GM12878 (cell line): ENCODE measurements at regions of chr19 and their contacts with region 1.

Region 1: GRCh38 chr19:39792999-39793546 is 14.4 kb downstream of the LEUTX start:
- DNase-seq: peak; percentile 40
- ATAC-seq: peak; percentile 97
- H3K4me3 ChIP-seq: peak overlapping the region; percentile 66
- H3K27ac ChIP-seq: peak overlapping the region; percentile 40; the same call in 1 of the 2 replicates
- H3K4me1 ChIP-seq: peaks cover 16% of the 10 kb centered on the region
- H3K27me3 ChIP-seq: no peaks in the 10 kb centered on the region
- CTCF ChIP-seq: peak; percentile 91 to 96 (median 94)
- EP300 ChIP-seq: no peak
- POLR2A ChIP-seq: no peak
- RAD21 ChIP-seq: peak; percentile 96

Region 2: DNA sequence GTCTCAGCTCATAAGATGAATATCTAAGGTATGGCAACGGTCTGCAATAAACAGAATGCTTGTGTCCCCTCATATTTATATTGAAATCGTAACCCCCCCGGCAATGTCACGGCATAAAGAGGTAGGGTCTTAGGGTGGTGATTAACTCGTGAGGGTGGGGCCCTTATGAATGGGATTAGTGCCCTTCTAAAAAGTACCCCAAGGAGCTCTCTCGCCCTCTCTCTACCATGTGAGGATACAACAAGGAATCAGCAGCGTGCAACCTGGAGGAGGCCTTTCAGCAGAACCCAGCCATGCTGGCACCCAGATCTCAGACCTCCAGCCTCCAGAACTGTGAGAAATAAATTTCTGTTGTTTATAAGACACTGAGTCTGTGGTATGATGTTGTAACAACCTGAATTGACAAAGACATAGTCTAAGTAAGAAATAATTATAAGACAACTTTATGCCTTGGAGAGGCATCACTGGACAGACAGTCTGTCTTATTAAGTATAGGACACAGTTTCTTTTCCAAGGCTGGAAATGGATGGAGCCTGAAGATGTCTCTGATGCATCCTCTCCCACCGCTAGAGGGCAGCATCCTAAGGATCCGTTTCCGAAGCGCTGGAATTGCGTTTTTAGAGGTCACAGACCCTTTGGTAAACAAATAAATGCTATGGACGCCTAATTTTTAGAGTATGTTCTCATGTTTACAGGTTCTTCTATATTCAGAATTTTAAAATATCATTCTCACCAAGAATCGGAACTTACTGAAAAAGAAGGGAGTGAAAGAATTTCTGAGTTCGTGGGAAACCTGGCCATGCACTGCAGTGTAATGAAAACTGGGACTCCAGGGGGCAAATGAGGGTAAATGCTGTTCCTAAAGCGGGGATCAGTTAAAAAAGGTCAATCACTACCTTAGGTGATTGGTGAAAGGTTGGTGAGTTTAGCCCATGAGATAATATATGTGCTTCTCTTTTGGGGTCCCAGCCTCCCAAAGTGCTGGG is 27.7 kb before region 1 on chr19:
- CTCF ChIA-PET with region 1: interaction called, 29 read pairs
- POLR2A ChIA-PET with region 1: no interaction called
- RAD21 ChIA-PET with region 1: interaction called, 11 read pairs
- SMC1A ChIA-PET with region 1: interaction called, 3 read pairs
- in situ Hi-C with region 1: no loop called
- intact Hi-C with region 1: no loop called
- DNase-seq: no peak
- ATAC-seq: no peak
- H3K4me3 ChIP-seq: no peak overlapping the region
- H3K27ac ChIP-seq: no peak overlapping the region
- H3K4me1 ChIP-seq: peaks cover 5% of the 10 kb centered on the region
- H3K27me3 ChIP-seq: no peaks in the 10 kb centered on the region
- CTCF ChIP-seq: peak; percentile 29 to 79 (median 56); a peak in 5 of 6 replicates
- EP300 ChIP-seq: no peak
- POLR2A ChIP-seq: no peak
- RAD21 ChIP-seq: 0 out of 2 replicates have a peak, but pooled peaks have one; percentile 22

Region 3: GRCh38 chr19:39778763-39779162 is 14.3 kb before region 1 on chr19 and contains the start of gene LEUTX:
- CTCF ChIA-PET with region 1: interaction called, 38 read pairs
- POLR2A ChIA-PET with region 1: no interaction called
- RAD21 ChIA-PET with region 1: interaction called, 4 read pairs
- SMC1A ChIA-PET with region 1: interaction called, 16 read pairs
- in situ Hi-C with region 1: no loop called
- intact Hi-C with region 1: no loop called
- DNase-seq: peak; percentile 55
- ATAC-seq: peak; percentile 93
- H3K4me3 ChIP-seq: 0 out of 2 replicates have a peak within 1 kb of the TSS, but pooled peaks have one; percentile 0
- H3K27ac ChIP-seq: no peak within 1 kb of the TSS
- H3K4me1 ChIP-seq: peaks cover 17% of the 10 kb centered on the region
- H3K27me3 ChIP-seq: no peaks in the 10 kb centered on the region
- CTCF ChIP-seq: no peak
- EP300 ChIP-seq: no peak
- POLR2A ChIP-seq: no peak
- RAD21 ChIP-seq: no peak
- polyA plus RNA-seq, gene LEUTX: 0.29 to 0.40 TPM

Region 4: GRCh38 chr19:39805104-39805503 is 12.0 kb after region 1 on chr19:
- CTCF ChIA-PET with region 1: interaction called, 16 read pairs
- POLR2A ChIA-PET with region 1: interaction called, 7 read pairs
- RAD21 ChIA-PET with region 1: interaction called, 7 read pairs
- SMC1A ChIA-PET with region 1: interaction called, 13 read pairs
- in situ Hi-C with region 1: no loop called
- intact Hi-C with region 1: no loop called
- DNase-seq: no peak
- ATAC-seq: no peak
- H3K4me3 ChIP-seq: no peak overlapping the region
- H3K27ac ChIP-seq: no peak overlapping the region
- H3K4me1 ChIP-seq: no peaks in the 10 kb centered on the region
- H3K27me3 ChIP-seq: no peaks in the 10 kb centered on the region
- CTCF ChIP-seq: no peak
- EP300 ChIP-seq: no peak
- POLR2A ChIP-seq: no peak
- RAD21 ChIP-seq: no peak

Region 5: GRCh38 chr19:39813264-39813993 is 20.4 kb after region 1 on chr19:
- CTCF ChIA-PET with region 1: interaction called, 15 read pairs
- POLR2A ChIA-PET with region 1: interaction called, 14 read pairs
- RAD21 ChIA-PET with region 1: interaction called, 7 read pairs
- SMC1A ChIA-PET with region 1: interaction called, 12 read pairs
- in situ Hi-C with region 1: no loop called
- intact Hi-C with region 1: no loop called
- DNase-seq: no peak
- ATAC-seq: no peak
- H3K4me3 ChIP-seq: no peak overlapping the region
- H3K27ac ChIP-seq: no peak overlapping the region
- H3K4me1 ChIP-seq: peaks cover 21% of the 10 kb centered on the region
- H3K27me3 ChIP-seq: no peaks in the 10 kb centered on the region
- CTCF ChIP-seq: no peak
- EP300 ChIP-seq: no peak
- POLR2A ChIP-seq: no peak
- RAD21 ChIP-seq: no peak

Region 6: DNA sequence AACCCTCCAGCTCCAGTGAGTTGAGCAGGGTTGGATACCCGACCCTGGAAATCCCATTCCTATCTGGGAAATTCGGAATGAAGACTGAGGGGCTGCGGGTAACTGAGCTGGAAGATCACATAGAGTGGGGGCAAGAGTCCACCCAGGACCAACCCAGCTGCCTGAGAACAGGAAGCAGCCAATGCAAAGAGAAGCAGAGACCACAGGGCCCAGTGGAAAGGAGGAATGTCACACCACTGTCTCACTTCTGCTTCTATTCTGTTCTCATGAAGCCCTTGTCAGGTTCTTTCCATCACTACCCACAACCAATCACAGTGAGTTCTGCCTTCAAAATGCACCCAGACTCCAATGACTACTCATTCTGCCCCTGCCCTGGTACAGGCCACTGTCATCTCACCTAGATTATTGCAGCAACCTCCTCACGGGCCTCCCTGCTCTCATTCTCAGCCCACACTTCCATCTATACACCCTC is 25.6 kb after region 1 on chr19:
- CTCF ChIA-PET with region 1: interaction called, 15 read pairs
- POLR2A ChIA-PET with region 1: interaction called, 14 read pairs
- RAD21 ChIA-PET with region 1: interaction called, 7 read pairs
- SMC1A ChIA-PET with region 1: interaction called, 12 read pairs
- in situ Hi-C with region 1: no loop called
- intact Hi-C with region 1: no loop called
- DNase-seq: peak; percentile 77
- ATAC-seq: peak; percentile 96
- H3K4me3 ChIP-seq: no peak overlapping the region
- H3K27ac ChIP-seq: peak overlapping the region; percentile 47
- H3K4me1 ChIP-seq: peaks cover 36% of the 10 kb centered on the region
- H3K27me3 ChIP-seq: no peaks in the 10 kb centered on the region
- CTCF ChIP-seq: no peak
- EP300 ChIP-seq: peak; percentile 30 to 60; a peak in 2 of 4 replicates
- POLR2A ChIP-seq: peak; percentile 38; the same call in 1 of the 2 replicates
- RAD21 ChIP-seq: no peak

Region 7: DNA sequence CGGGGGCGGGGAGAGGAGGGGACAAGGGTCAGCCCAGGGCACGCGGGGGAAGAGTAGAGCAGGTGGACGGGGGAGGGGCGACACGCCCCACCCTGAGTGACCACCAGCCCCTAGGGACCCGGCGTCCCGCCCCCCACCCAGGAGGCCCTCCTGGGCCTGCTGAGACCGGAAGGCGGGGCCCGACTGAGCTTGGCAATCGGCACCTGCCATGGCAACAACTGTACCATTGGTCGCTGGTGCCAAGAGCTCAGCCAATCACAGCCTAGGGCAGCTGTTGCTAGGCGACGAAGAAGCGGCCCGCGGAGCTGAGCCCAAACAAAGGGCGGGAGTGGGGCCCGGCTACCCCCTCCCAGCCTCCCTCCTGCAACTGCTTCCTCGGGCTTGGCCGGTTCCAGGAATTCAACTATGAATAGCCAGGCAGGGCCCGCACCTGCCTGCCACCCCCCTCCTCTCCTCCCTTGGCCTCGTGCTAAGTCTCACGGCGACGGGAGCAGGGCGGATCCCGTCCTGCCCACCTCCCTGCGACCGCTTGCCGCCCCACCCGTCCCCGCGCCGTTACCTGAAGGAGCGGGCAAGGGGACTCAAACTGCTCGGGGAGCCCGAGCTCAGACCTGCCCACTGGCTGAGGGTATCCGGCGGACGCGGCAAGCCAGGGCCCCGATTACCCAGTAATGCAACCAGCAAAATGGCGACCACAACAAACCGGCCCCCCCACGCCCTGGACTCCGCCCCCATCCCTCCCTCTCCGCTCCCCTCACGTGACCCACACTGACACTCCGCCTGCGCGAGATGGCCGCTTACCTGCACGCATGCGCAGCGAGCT is 40.6 kb after region 1 on chr19 and contains the start of gene DYRK1B:
- CTCF ChIA-PET with region 1: interaction called, 18 read pairs
- POLR2A ChIA-PET with region 1: interaction called, 9 read pairs
- RAD21 ChIA-PET with region 1: interaction called, 21 read pairs
- SMC1A ChIA-PET with region 1: interaction called, 14 read pairs
- in situ Hi-C with region 1: no loop called
- intact Hi-C with region 1: no loop called
- DNase-seq: peak; percentile 92
- ATAC-seq: peak; percentile 98
- H3K4me3 ChIP-seq: peak within 1 kb of the TSS; percentile 97
- H3K27ac ChIP-seq: peak within 1 kb of the TSS; percentile 51
- H3K4me1 ChIP-seq: peaks cover 15% of the 10 kb centered on the region
- H3K27me3 ChIP-seq: no peaks in the 10 kb centered on the region
- CTCF ChIP-seq: no peak
- EP300 ChIP-seq: peak in 1 of 2 experiments; percentile 70; a peak in 2 of 4 replicates
- POLR2A ChIP-seq: peak; percentile 69
- RAD21 ChIP-seq: no peak
- polyA plus RNA-seq, gene DYRK1B: 0.07 TPM in 1 of 2 experiments, not detected in the other